ENCODE measurements at regions of chr10 and their contacts with region 1.

Region 1: DNA sequence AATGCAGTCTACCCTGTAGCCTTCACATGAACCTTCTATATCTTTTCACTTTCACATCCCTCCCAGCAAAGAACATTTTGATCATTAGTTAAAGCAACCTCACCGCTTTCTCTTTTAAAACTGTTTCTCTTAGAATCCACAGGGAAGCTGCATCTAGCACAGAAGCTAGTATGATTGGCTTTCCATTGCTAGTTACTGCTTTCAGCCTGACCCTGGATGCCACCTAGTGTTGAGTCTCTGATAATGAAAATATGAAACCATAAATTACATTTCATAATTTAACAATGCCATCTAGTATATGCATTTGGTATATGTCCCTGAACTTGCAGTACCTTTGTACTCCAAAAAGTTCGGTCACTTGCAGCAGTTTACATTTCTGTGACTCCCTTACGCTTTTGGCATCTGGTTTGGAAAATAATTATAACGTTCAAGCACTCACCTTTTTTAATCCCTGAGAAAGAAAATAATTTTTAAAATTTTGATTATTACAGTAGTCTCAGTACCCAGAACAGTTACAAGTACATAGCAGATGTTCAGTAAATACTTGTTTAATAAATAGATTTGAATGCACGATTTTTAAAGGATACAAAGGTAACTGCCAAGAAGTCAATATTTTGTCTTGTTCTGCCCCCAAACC is 22.7 kb downstream of the CISD1 start:
- DNase-seq: peak; percentile 53
- ATAC-seq: peak; percentile 61
- H3K4me3 Mint-ChIP-seq: no peak overlapping the region
- H3K27ac Mint-ChIP-seq: no peak overlapping the region
- H3K4me1 Mint-ChIP-seq: no peaks in the 10 kb centered on the region
- H3K27me3 Mint-ChIP-seq: no peaks in the 10 kb centered on the region

Region 2: DNA sequence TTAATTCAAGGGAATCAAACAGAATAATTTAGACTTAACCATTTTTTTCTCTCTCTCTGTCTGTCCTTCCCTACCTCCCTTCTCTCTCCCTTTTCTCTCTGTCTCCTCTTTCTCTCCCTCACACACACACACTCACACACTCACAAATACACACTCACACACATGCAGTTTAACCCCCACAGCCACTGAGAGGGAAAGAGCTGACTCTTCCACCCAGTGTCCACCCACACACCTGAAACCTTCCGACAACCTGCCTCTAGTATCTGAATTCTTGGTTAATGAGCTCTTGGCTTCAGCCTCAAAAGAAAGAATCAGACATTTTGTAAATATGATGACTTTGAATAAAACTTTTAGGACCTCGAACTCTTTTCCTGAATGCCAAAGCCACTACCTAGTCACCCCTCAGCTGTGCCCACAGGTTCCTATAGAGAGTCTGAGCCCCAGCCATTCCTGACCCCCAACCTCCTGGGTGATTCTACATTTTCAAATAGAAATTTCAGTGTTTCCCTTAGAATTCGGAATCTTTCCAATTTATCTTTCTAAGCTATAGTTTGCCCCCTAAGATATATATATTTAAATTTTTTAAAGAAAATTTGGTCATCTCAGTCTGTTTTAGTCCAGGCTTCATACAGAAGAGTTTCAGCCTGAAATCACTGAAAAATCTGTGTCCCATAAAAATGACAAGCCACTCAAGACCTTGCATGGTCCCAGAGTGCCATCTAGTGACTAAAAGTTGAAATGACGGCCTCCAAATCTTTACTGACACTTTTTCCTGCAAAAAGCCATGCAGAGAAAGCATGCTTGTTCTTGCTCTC is 226.7 kb before region 1 on chr10:
- CTCF ChIA-PET with region 1: no interaction called
- POLR2A ChIA-PET with region 1: no interaction called
- DNase-seq: peak; percentile 32
- ATAC-seq: no peak
- H3K4me3 Mint-ChIP-seq: no peak overlapping the region
- H3K27ac Mint-ChIP-seq: no peak overlapping the region
- H3K4me1 Mint-ChIP-seq: no peaks in the 10 kb centered on the region
- H3K27me3 Mint-ChIP-seq: peaks cover 2% of the 10 kb centered on the region

Region 3: DNA sequence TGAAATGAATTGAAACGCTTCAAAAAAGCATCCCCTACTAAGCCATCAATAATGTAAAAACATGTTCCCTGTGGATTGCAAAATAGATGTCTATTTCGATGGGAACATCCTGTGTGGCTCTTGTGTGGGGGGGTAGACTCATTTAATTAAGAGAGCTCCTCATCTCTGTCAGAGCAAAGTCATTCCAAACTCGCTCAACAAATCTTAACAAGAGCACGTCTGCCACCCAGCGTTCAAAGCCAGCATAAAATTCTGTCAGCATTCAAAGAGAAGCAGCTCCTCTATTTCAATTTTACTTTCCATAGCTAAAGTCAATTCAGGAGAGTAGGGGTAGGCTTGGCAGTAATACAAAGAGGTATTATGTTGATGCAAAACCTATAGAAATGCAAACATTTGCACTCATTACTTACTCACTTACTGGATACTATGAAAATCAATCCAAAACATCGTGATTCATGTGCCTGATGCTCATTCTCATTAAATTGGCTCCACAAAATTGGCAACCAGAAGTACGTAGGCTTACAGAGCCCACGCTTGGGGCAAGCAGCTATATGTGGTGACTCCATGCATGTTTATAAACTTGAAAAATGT is 138.9 kb before region 1 on chr10:
- CTCF ChIA-PET with region 1: interaction called, 22 read pairs
- POLR2A ChIA-PET with region 1: no interaction called
- DNase-seq: peak; percentile 53
- ATAC-seq: no peak
- H3K4me3 Mint-ChIP-seq: no peak overlapping the region
- H3K27ac Mint-ChIP-seq: no peak overlapping the region
- H3K4me1 Mint-ChIP-seq: peaks cover 2% of the 10 kb centered on the region
- H3K27me3 Mint-ChIP-seq: peaks cover 13% of the 10 kb centered on the region

Region 4: DNA sequence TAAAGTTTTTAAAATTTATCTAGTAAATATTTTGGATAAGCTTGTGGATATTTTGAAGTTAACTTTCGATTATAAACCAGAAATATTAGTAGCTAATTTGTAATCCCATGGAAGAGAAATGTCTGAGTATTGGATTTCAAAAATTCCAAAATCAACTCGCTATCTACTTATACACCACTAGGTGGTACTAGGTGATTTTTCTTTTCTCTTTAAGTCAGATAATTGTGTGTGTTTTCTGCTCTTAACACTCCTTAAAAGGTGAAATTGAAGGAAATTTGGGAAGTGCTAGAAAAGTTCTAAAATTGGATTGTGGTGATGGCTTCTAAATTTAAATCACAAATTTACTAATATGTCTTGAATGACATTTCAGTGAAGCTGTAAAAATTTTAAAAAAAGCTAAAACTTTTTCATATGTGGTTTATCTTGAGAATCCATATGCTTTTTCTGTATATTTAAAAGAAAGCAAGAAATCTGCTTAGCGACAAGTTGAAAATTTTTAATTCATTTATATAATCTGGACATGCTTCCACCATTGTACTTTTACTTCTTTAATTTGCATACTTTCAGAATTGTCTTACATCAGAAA is 114.2 kb before region 1 on chr10:
- CTCF ChIA-PET with region 1: interaction called, 137 read pairs
- POLR2A ChIA-PET with region 1: no interaction called
- DNase-seq: no peak
- ATAC-seq: no peak
- H3K4me3 Mint-ChIP-seq: no peak overlapping the region
- H3K27ac Mint-ChIP-seq: no peak overlapping the region
- H3K4me1 Mint-ChIP-seq: no peaks in the 10 kb centered on the region
- H3K27me3 Mint-ChIP-seq: peaks cover 5% of the 10 kb centered on the region

Region 5: GRCh38 chr10:58201704-58202103 is 90.0 kb before region 1 on chr10:
- CTCF ChIA-PET with region 1: interaction called, 12 read pairs
- POLR2A ChIA-PET with region 1: no interaction called
- DNase-seq: peak; percentile 35
- ATAC-seq: peak; percentile 39
- H3K4me3 Mint-ChIP-seq: no peak overlapping the region
- H3K27ac Mint-ChIP-seq: peak overlapping the region; percentile 60
- H3K4me1 Mint-ChIP-seq: peaks cover 19% of the 10 kb centered on the region
- H3K27me3 Mint-ChIP-seq: no peaks in the 10 kb centered on the region

Region 6: GRCh38 chr10:58268870-58269605 is 22.6 kb before region 1 on chr10 and contains the start of gene CISD1:
- CTCF ChIA-PET with region 1: interaction called, 24 read pairs
- POLR2A ChIA-PET with region 1: no interaction called
- DNase-seq: peak; percentile 96
- ATAC-seq: peak; percentile 81
- H3K4me3 Mint-ChIP-seq: peak within 1 kb of the TSS; percentile 93
- H3K27ac Mint-ChIP-seq: peak within 1 kb of the TSS; percentile 94
- H3K4me1 Mint-ChIP-seq: peaks cover 35% of the 10 kb centered on the region
- H3K27me3 Mint-ChIP-seq: no peaks in the 10 kb centered on the region
- total RNA-seq, gene CISD1: 40.3 to 40.9 TPM

Region 7: DNA sequence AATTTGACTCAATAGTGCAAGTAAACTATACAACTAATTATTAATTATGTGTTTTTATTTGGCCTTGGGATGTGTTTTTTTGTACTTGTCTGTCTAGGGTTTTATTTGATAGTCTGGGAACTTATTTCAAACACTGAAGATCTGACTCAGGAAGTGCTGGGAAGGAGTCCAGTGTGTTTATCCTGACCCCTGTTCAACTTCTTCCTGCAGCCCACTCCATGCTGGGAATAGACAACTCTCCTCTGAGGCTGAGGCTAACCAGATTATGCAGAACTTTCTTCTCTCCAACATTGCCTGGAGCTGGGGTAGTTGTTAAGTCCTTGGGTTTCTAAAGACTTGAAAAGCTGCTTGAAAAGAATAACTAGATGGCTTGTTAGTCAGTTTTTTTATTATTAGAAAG is 15.7 kb before region 1 on chr10:
- CTCF ChIA-PET with region 1: interaction called, 12 read pairs
- POLR2A ChIA-PET with region 1: no interaction called
- DNase-seq: no peak
- ATAC-seq: no peak
- H3K4me3 Mint-ChIP-seq: no peak overlapping the region
- H3K27ac Mint-ChIP-seq: no peak overlapping the region
- H3K4me1 Mint-ChIP-seq: peaks cover 9% of the 10 kb centered on the region
- H3K27me3 Mint-ChIP-seq: no peaks in the 10 kb centered on the region